HepG2 (cell line): ENCODE measurements at regions of chr17 and their contacts with region 1.

Region 1: GRCh38 chr17:57861000-57861789 is 11.4 kb upstream of the MRPS23 start:
- DNase-seq: peak; percentile 94
- ATAC-seq: peak; percentile 56
- H3K4me3 ChIP-seq: peak overlapping the region; percentile 71 to 90 (median 81)
- H3K27ac ChIP-seq: peak overlapping the region; percentile 77
- H3K4me1 ChIP-seq: peaks cover 68% of the 10 kb centered on the region
- H3K27me3 ChIP-seq: no peaks in the 10 kb centered on the region; a peak in 1 of 5 replicates
- CTCF ChIP-seq: peak; percentile 26; the same call in 1 of the 2 replicates
- EP300 ChIP-seq: peak in 1 of 2 experiments; percentile 90; a peak in 2 of 4 replicates
- POLR2A ChIP-seq: peak; percentile 46 to 72; a peak in 2 of 4 replicates
- RAD21 ChIP-seq: no peak

Region 2: GRCh38 chr17:57875309-57876115 is 14.3 kb after region 1 on chr17:
- CTCF ChIA-PET with region 1: interaction called, 5 read pairs
- POLR2A ChIA-PET with region 1: interaction called, 89 read pairs
- in situ Hi-C with region 1: no loop called
- intact Hi-C with region 1: loop called (anchors 1 kb)
- DNase-seq: peak; percentile 93
- ATAC-seq: peak; percentile 85
- H3K4me3 ChIP-seq: peak overlapping the region in 1 of 3 experiments; percentile 15; a peak in 1 of 6 replicates
- H3K27ac ChIP-seq: peak overlapping the region; percentile 64
- H3K4me1 ChIP-seq: peaks cover 68% of the 10 kb centered on the region
- H3K27me3 ChIP-seq: no peaks in the 10 kb centered on the region
- CTCF ChIP-seq: peak; percentile 62
- EP300 ChIP-seq: peak in 1 of 2 experiments; percentile 51; a peak in 1 of 4 replicates
- POLR2A ChIP-seq: no peak
- RAD21 ChIP-seq: peak; percentile 60; the same call in 1 of the 2 replicates

Region 3: DNA sequence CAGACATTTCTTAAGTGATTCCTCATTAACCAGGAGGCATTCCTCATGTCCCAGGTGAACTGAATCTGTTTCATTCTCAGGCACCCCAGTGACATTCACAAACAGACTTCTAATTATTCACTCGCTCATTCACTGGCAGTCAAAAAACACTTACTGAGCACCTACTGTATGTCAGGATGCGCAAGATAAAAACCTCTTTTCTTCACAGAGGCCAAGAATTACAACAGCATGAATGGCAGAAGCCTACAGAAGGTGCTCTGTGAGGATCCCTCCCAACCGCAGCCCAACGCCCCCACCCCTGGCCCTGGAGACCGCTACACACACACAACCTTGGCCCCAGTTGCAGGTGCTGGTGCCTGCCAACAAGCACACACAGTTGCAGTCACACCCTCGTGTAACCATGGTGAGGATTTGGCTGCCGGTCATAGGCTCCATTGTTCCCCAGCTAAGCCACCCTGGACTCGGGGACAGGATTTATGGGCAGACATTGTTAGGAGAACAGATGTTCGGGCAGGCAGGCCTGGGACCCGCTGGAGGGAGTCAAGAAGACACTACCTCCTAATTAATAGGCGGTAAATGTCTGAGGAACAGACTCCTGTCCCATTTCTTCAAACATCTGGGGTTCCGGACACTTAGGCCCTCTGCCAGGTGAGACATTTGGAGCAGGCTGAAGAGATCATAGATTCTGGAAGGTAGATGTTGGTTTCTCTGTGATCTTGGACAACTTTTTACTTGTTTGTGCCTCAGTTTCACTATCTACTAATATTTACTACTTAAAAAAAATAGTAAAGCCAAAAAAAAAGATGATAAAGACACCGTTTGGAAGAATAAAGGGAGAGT is 50.9 kb after region 1 on chr17:
- CTCF ChIA-PET with region 1: no interaction called
- POLR2A ChIA-PET with region 1: no interaction called
- in situ Hi-C with region 1: no loop called
- intact Hi-C with region 1: no loop called
- DNase-seq: peak; percentile 86
- ATAC-seq: peak; percentile 79
- H3K4me3 ChIP-seq: peak overlapping the region in 1 of 3 experiments; percentile 13; a peak in 1 of 6 replicates
- H3K27ac ChIP-seq: no peak overlapping the region
- H3K4me1 ChIP-seq: peaks cover 54% of the 10 kb centered on the region
- H3K27me3 ChIP-seq: no peaks in the 10 kb centered on the region
- CTCF ChIP-seq: no peak
- EP300 ChIP-seq: no peak
- POLR2A ChIP-seq: no peak
- RAD21 ChIP-seq: no peak

Region 4: GRCh38 chr17:58112970-58113631 is 251.9 kb after region 1 on chr17:
- CTCF ChIA-PET with region 1: interaction called, 13 read pairs
- POLR2A ChIA-PET with region 1: no interaction called
- in situ Hi-C with region 1: loop called (anchors 10 kb)
- intact Hi-C with region 1: loop called (anchors 2 kb)
- DNase-seq: peak; percentile 70
- ATAC-seq: peak; percentile 84
- H3K4me3 ChIP-seq: no peak overlapping the region
- H3K27ac ChIP-seq: no peak overlapping the region
- H3K4me1 ChIP-seq: no peaks in the 10 kb centered on the region
- H3K27me3 ChIP-seq: peaks cover 1 to 4% of the 10 kb centered on the region in 2 experiments; a peak in 3 of 5 replicates
- CTCF ChIP-seq: peak; percentile 98
- EP300 ChIP-seq: no peak
- POLR2A ChIP-seq: no peak
- RAD21 ChIP-seq: peak; percentile 93